Heart right ventricle (tissue), 16 donors: ENCODE measurements at regions of chr22 and their contacts with region 1.

Region 1: GRCh38 chr22:19962233-19962908 is 20.8 kb upstream of the TXNRD2 start:
- DNase-seq: peak; percentile 60 to 64
- ATAC-seq: peak; percentile 19 to 56 (median 40)
- H3K4me3 ChIP-seq: no peak overlapping the region
- H3K27ac ChIP-seq: no peak overlapping the region
- H3K4me1 ChIP-seq: peaks cover 8 to 46% (median 27%) of the 10 kb centered on the region in 9 donors
- H3K27me3 ChIP-seq: no peaks in the 10 kb centered on the region
- CTCF ChIP-seq: peak in 8 of 9 donors; percentile 49 to 64 (median 59)

Region 2: DNA sequence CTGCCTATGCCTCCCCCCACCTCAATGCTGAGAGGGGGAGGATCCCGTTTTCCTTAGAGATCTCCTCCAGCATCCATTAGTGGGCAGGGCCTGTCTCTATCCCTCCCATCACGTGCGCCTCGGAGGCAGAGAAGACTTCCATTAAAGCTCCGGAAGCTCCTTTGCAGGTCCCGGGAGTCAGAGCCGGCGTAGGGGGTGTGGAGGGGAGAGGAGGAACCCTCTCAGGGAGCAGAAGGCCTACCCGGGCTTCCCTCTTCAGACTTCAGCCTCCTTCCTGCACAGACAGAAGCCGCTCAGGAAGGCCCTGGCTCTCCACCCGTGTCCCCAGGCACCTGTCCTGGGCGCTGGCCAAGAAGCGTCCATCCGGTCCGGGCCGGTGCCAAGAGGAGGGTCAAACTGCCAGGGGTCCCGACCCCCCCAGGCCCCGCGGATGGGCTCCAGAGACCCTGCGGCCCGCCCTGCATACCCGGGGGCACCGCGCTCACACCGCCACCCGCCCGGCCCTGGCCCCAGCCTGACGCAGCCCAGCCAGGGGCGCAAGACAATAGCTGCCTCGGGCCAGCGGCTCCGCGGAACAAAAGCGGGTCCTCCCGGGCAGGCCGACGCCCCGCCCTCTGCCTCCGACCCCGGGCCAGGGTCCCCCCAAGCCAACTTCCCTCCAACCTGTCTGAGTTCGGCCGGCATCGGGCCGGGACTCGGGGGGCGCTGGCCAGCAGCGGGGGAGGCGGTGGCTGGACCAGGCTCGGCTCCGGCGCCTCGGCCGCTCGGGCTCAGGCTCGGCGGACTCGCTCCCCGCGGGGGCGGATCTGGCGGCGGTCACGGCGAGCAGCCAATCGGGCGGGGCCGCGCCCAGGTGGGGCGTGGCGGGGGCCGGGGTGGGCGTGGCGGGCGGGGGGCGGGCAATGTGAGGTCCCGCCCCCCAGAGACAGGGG is 24.3 kb after region 1 on chr22:
- intact Hi-C with region 1: loop called in 1 of 10 experiments (anchors 2 kb)
- DNase-seq: peak; percentile 77 to 87
- ATAC-seq: peak; percentile 61 to 87 (median 79)
- H3K4me3 ChIP-seq: peak overlapping the region; percentile 50 to 93 (median 82)
- H3K27ac ChIP-seq: peak overlapping the region; percentile 6 to 95 (median 88)
- H3K4me1 ChIP-seq: peaks cover 38 to 80% (median 54%) of the 10 kb centered on the region in 9 donors
- H3K27me3 ChIP-seq: no peaks in the 10 kb centered on the region
- CTCF ChIP-seq: no peak

Region 3: GRCh38 chr22:20116951-20117645 is 154.7 kb after region 1 on chr22 and contains the start of gene TRMT2A:
- intact Hi-C with region 1: loop called in 2 of 10 experiments (anchors 10 kb)
- DNase-seq: peak; percentile 97
- ATAC-seq: peak; percentile 91 to 96 (median 94)
- H3K4me3 ChIP-seq: peak within 1 kb of the TSS; percentile 57 to 99 (median 82)
- H3K27ac ChIP-seq: peak within 1 kb of the TSS; percentile 26 to 93 (median 89)
- H3K4me1 ChIP-seq: peaks cover 19 to 57% (median 37%) of the 10 kb centered on the region in 9 donors
- H3K27me3 ChIP-seq: no peaks in the 10 kb centered on the region
- CTCF ChIP-seq: peak in 5 of 9 donors; percentile 20 to 49 (median 36)
- total RNA-seq, gene TRMT2A: 18.4 to 29.6 (median 25.8) TPM

Region 4: GRCh38 chr22:20130739-20131596 is 168.6 kb after region 1 on chr22:
- intact Hi-C with region 1: loop called in 2 of 10 experiments (anchors 10 kb)
- DNase-seq: peak; percentile 88 to 92
- ATAC-seq: peak; percentile 79 to 94 (median 89)
- H3K4me3 ChIP-seq: peak overlapping the region; percentile 85 to 100 (median 94)
- H3K27ac ChIP-seq: peak overlapping the region; percentile 89 to 100 (median 96)
- H3K4me1 ChIP-seq: peaks cover 34 to 58% (median 46%) of the 10 kb centered on the region in 9 donors
- H3K27me3 ChIP-seq: no peaks in the 10 kb centered on the region
- CTCF ChIP-seq: no peak